Ascending aorta (tissue), 2 donors: ENCODE measurements at regions of chr1 and their contacts with region 1.

Region 1: DNA sequence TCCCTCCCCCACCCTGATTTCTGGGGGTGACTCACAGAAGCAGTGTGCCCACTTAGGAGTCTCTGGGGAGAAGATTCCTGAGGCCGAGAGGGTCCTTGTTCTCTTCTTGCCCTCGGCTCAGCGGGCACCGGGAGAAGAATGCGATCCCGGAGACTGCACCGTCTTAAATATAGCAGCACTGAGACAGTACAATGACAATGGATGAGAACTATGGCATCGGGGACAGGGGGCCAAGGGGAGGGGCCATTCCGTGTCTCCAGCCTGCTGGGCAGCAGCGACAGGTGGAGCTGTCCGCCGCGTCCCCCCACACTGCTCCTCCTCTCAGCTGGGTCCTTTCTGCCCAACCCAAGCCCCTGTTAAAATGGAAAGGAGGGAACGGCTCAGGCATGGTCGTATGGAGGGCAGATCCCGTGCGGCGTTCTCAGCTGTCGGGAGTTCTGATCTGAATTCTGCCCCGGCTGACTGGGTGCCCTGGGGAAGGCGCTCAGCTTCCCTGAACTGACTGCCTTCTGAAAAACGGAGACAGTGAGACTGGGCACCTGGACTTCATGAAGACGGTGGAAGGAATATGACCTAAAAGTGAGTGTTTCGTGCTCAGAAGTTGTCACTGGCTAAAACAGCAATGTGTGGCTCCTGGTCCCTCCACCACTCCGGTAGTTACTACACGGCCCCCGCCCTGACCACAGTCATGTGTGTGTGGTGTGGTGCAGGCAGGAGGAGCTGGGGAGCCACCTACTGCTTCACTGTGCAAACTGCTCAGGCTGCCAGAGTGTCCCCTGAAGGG is at the start of gene MYOM3:
- DNase-seq: peak; percentile 46 to 88
- H3K4me3 ChIP-seq: peak within 1 kb of the TSS; percentile 42 to 57
- H3K27ac ChIP-seq: peak within 1 kb of the TSS; percentile 89 to 96
- H3K4me1 ChIP-seq: peaks cover 12 to 21% of the 10 kb centered on the region in 2 donors
- H3K27me3 ChIP-seq: no peaks in the 10 kb centered on the region
- CTCF ChIP-seq: peak; percentile 66 to 82 (median 73)
- total RNA-seq, gene MYOM3: 1.2 TPM

Region 2: GRCh38 chr1:23923592-23924499 is 188.3 kb before region 1 on chr1:
- intact Hi-C with region 1: loop called (anchors 5 kb)
- DNase-seq: peak in 1 of 2 donors; percentile 77
- H3K4me3 ChIP-seq: no peak overlapping the region
- H3K27ac ChIP-seq: peak overlapping the region; percentile 62 to 77
- H3K4me1 ChIP-seq: peaks cover 3 to 26% of the 10 kb centered on the region in 2 donors
- H3K27me3 ChIP-seq: no peaks in the 10 kb centered on the region
- CTCF ChIP-seq: no peak

Region 3: DNA sequence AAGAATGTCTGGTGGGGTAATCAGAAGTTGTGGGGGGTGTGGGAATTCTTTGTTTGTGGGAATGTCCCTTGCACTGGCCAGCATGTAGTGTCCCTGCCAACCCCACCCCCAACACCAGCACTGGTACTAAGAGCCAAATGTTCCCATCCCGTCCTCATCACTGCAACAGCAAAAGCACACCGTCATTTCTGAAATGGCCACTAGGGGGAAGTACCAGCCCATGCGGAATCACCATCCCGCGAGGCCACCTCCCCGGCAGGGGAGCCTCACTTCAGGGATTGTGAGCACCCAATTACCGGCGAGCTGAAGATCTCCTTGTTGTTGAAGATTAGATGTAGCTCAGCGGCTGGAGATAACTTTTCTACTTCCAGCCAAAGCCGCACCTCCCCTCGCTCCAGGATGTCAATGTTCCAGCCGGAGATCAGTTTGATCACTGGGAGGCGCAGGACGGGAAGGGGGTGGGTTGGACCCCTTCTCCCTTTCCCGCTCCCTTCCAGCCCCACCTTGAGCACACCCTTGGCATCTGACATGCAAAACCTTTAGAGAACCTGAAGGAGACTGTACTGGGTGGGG is 41.3 kb before region 1 on chr1:
- intact Hi-C with region 1: loop called (anchors 1 kb)
- DNase-seq: peak in 1 of 2 donors; percentile 87
- H3K4me3 ChIP-seq: no peak overlapping the region
- H3K27ac ChIP-seq: no peak overlapping the region
- H3K4me1 ChIP-seq: no peaks in the 10 kb centered on the region
- H3K27me3 ChIP-seq: no peaks in the 10 kb centered on the region
- CTCF ChIP-seq: peak; percentile 80 to 95 (median 85)